Caco-2 (cell line): ENCODE measurements at regions of chrX and their contacts with region 1.

Region 1: GRCh38 chrX:49878834-49879659 is at the start of gene USP27X:
- DNase-seq: peak; percentile 86 to 87
- H3K4me3 ChIP-seq: peak within 1 kb of the TSS; percentile 73
- H3K4me3 Mint-ChIP-seq: peak within 1 kb of the TSS; percentile 84
- H3K27ac Mint-ChIP-seq: peak within 1 kb of the TSS; percentile 66
- H3K4me1 ChIP-seq: peaks cover 33% of the 10 kb centered on the region
- H3K4me1 Mint-ChIP-seq: peaks cover 11% of the 10 kb centered on the region
- H3K27me3 ChIP-seq: no peaks in the 10 kb centered on the region
- H3K27me3 Mint-ChIP-seq: no peaks in the 10 kb centered on the region
- CTCF ChIP-seq: peak; percentile 42 to 64
- total RNA-seq, gene USP27X: 11.6 and 13.5 TPM in 2 replicates

Region 2: GRCh38 chrX:49761481-49761880 is 117.6 kb before region 1 on chrX:
- CTCF ChIA-PET with region 1: interaction called, 4 read pairs
- POLR2A ChIA-PET with region 1: no interaction called
- intact Hi-C with region 1: loop called (anchors 2 kb)
- DNase-seq: peak in 1 of 2 experiments; percentile 5
- H3K4me3 ChIP-seq: no peak overlapping the region
- H3K4me3 Mint-ChIP-seq: no peak overlapping the region
- H3K27ac Mint-ChIP-seq: no peak overlapping the region
- H3K4me1 ChIP-seq: no peaks in the 10 kb centered on the region
- H3K4me1 Mint-ChIP-seq: peaks cover 7% of the 10 kb centered on the region
- H3K27me3 ChIP-seq: no peaks in the 10 kb centered on the region
- H3K27me3 Mint-ChIP-seq: no peaks in the 10 kb centered on the region
- CTCF ChIP-seq: peak in 1 of 2 experiments; percentile 46

Region 3: GRCh38 chrX:49773993-49774392 is 105.1 kb before region 1 on chrX:
- CTCF ChIA-PET with region 1: no interaction called
- POLR2A ChIA-PET with region 1: no interaction called
- intact Hi-C with region 1: no loop called
- DNase-seq: no peak
- H3K4me3 ChIP-seq: no peak overlapping the region
- H3K4me3 Mint-ChIP-seq: no peak overlapping the region
- H3K27ac Mint-ChIP-seq: no peak overlapping the region
- H3K4me1 ChIP-seq: 0 out of 2 replicates have a peak, but pooled peaks cover 4% of the 10 kb centered on the region
- H3K4me1 Mint-ChIP-seq: peaks cover 7% of the 10 kb centered on the region
- H3K27me3 ChIP-seq: no peaks in the 10 kb centered on the region
- H3K27me3 Mint-ChIP-seq: no peaks in the 10 kb centered on the region
- CTCF ChIP-seq: no peak

Region 4: DNA sequence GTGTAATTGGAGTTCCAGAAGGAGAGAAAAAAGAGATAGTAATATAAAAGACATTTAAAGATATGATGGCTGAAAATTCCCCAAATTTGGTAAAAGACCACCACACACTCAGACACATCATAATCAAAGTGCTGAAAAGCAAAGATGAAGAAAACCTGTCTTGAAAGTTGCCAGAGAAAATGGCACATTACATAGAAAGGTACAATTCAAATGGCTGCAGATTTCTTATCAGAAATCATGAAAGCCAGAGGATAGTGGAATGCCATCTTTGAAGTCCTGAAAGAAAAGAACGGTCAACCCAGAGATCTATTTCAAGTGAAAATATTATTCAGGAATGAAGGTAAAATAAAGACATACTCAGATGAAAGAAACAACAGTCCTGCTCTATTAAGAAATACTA is 79.2 kb before region 1 on chrX:
- CTCF ChIA-PET with region 1: no interaction called
- POLR2A ChIA-PET with region 1: no interaction called
- intact Hi-C with region 1: no loop called
- DNase-seq: no peak
- H3K4me3 ChIP-seq: no peak overlapping the region
- H3K4me3 Mint-ChIP-seq: no peak overlapping the region
- H3K27ac Mint-ChIP-seq: no peak overlapping the region
- H3K4me1 ChIP-seq: no peaks in the 10 kb centered on the region
- H3K4me1 Mint-ChIP-seq: no peaks in the 10 kb centered on the region
- H3K27me3 ChIP-seq: no peaks in the 10 kb centered on the region
- H3K27me3 Mint-ChIP-seq: no peaks in the 10 kb centered on the region
- CTCF ChIP-seq: no peak

Region 5: GRCh38 chrX:49840679-49841078 is 38.4 kb before region 1 on chrX:
- CTCF ChIA-PET with region 1: interaction called, 18 read pairs
- POLR2A ChIA-PET with region 1: interaction called, 3 read pairs
- intact Hi-C with region 1: loop called (anchors 1 kb)
- DNase-seq: peak; percentile 80 to 88
- H3K4me3 ChIP-seq: no peak overlapping the region
- H3K4me3 Mint-ChIP-seq: no peak overlapping the region
- H3K27ac Mint-ChIP-seq: no peak overlapping the region
- H3K4me1 ChIP-seq: peaks cover 8% of the 10 kb centered on the region; the same call in 1 of the 2 replicates
- H3K4me1 Mint-ChIP-seq: no peaks in the 10 kb centered on the region
- H3K27me3 ChIP-seq: no peaks in the 10 kb centered on the region
- H3K27me3 Mint-ChIP-seq: no peaks in the 10 kb centered on the region
- CTCF ChIP-seq: peak; percentile 33 to 58

Region 6: GRCh38 chrX:49860867-49861495 is 18.1 kb before region 1 on chrX:
- CTCF ChIA-PET with region 1: no interaction called
- POLR2A ChIA-PET with region 1: no interaction called
- intact Hi-C with region 1: loop called (anchors 2 kb)
- DNase-seq: peak; percentile 54 to 79
- H3K4me3 ChIP-seq: no peak overlapping the region
- H3K4me3 Mint-ChIP-seq: peak overlapping the region; percentile 26
- H3K27ac Mint-ChIP-seq: peak overlapping the region; percentile 62
- H3K4me1 ChIP-seq: peaks cover 40% of the 10 kb centered on the region
- H3K4me1 Mint-ChIP-seq: peaks cover 31% of the 10 kb centered on the region
- H3K27me3 ChIP-seq: no peaks in the 10 kb centered on the region
- H3K27me3 Mint-ChIP-seq: no peaks in the 10 kb centered on the region
- CTCF ChIP-seq: no peak

Region 7: DNA sequence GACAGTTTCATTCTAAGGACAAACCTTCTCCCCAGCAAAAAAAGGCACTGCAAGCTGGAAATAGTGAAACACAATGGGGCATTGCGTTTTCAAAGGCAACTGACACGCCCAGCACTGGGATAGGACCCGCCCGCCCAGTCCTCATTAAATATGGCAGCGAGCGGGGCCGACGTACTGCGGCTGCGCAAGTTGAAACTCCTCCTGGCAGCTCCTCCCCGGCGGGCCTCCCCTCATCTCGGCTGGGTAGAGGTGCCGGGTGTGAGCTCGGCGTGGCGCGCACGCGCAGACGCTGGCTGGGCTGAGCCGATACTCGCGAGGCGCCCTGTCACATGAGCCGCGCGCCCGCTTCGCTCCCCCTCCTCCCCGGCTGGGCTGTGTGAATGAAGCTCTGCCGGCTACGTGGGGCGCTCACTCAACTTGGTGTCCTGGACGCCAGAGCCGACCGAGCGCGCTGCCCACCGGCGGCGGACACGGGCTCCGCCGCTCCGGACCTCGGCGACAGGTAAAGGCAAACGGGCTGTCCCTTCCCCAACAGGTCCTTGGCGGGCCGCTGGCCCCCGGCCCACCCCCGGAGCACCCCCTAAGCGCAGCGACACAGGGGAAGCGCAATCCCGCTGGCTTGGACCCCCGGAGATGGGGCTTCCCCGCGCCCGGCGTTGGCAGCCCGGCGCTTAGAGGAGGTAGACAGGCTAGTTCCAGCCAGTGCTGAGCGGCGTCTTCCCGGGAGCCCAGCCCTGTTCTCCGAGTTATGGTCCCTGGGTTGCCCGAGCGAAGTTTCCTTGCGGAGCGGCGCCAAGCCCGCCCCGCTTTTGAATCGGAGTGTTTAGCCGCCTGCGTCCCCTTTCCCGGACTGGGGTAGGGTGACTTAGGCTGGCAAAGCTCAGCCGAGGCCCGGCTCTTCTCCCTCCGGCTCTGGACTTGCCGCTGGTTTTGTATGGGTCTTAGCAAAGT is 43.5 kb after region 1 on chrX and contains the start of gene CLCN5:
- CTCF ChIA-PET with region 1: interaction called, 4 read pairs
- POLR2A ChIA-PET with region 1: no interaction called
- intact Hi-C with region 1: loop called (anchors 1 kb)
- DNase-seq: peak; percentile 95 to 97
- H3K4me3 ChIP-seq: peak within 1 kb of the TSS; percentile 77
- H3K4me3 Mint-ChIP-seq: peak within 1 kb of the TSS; percentile 75
- H3K27ac Mint-ChIP-seq: peak within 1 kb of the TSS; percentile 77
- H3K4me1 ChIP-seq: peaks cover 6% of the 10 kb centered on the region; the same call in 1 of the 2 replicates
- H3K4me1 Mint-ChIP-seq: peaks cover 35% of the 10 kb centered on the region
- H3K27me3 ChIP-seq: no peaks in the 10 kb centered on the region
- H3K27me3 Mint-ChIP-seq: no peaks in the 10 kb centered on the region
- CTCF ChIP-seq: no peak
- total RNA-seq, gene CLCN5: 61.0 and 70.0 TPM in 2 replicates

Region 8: GRCh38 chrX:50081282-50081889 is 202.3 kb after region 1 on chrX:
- CTCF ChIA-PET with region 1: no interaction called
- POLR2A ChIA-PET with region 1: no interaction called
- intact Hi-C with region 1: loop called (anchors 1 kb)
- DNase-seq: peak; percentile 53
- H3K4me3 ChIP-seq: no peak overlapping the region
- H3K4me3 Mint-ChIP-seq: no peak overlapping the region
- H3K27ac Mint-ChIP-seq: no peak overlapping the region
- H3K4me1 ChIP-seq: peaks cover under 1% of the 10 kb centered on the region; the same call in 1 of the 2 replicates
- H3K4me1 Mint-ChIP-seq: peaks cover 21% of the 10 kb centered on the region
- H3K27me3 ChIP-seq: no peaks in the 10 kb centered on the region
- H3K27me3 Mint-ChIP-seq: no peaks in the 10 kb centered on the region
- CTCF ChIP-seq: peak in 1 of 2 experiments; percentile 60